Dendritic cell treated with granulocyte-macrophage colony-stimulating factor and Interleukin-4, amounts not matched to agents 40 ng/mL and 50 ng/mL, for 4 days (primary cell): ENCODE measurements at regions of chr4 and their contacts with region 1.

Region 1: DNA sequence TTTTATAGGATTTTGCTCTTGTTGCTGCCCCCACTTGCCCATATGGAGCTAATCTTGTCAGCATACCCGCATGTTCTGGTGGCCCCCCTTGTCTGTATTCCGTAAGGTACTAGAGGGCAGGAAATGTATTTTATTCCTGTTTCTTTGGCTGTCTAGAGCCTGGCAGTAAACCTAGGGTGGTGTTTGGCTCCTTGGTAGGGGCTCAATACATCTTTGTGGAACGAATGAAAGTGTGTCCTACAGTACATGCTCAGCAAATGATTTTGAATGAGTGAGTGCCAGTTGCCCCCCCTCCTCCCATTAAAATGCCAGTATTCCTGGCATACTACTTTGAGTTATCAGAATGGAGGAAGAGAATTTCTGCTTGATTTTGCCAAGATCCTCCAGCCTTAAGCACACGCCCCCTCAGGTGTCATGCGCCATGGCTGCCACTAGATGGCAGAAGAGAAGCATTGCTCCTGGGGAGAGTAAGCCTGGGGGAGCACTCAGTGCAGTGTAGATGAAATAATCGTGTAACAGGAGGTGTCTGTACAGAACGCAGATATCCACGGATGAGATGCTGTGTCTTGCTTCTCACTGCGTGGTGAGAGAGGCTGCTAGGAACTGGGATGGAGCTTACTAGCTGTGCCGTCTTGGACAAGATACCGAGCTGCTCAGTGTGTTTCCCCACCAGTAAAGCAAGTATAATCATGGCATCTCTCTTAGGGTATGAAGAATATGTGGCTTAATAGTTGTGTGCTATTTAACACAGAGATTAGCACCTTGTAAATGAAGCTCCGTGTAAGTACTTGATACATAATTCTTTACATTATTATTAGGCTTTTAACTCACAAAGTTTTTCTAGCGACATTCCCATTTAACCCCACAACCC is 17.2 kb upstream of the RNF212 start:
- H3K4me3 Mint-ChIP-seq: no peak overlapping the region
- H3K27ac Mint-ChIP-seq: no peak overlapping the region
- H3K4me1 Mint-ChIP-seq: peaks cover 5% of the 10 kb centered on the region
- H3K27me3 Mint-ChIP-seq: peaks cover 24% of the 10 kb centered on the region

Region 2: DNA sequence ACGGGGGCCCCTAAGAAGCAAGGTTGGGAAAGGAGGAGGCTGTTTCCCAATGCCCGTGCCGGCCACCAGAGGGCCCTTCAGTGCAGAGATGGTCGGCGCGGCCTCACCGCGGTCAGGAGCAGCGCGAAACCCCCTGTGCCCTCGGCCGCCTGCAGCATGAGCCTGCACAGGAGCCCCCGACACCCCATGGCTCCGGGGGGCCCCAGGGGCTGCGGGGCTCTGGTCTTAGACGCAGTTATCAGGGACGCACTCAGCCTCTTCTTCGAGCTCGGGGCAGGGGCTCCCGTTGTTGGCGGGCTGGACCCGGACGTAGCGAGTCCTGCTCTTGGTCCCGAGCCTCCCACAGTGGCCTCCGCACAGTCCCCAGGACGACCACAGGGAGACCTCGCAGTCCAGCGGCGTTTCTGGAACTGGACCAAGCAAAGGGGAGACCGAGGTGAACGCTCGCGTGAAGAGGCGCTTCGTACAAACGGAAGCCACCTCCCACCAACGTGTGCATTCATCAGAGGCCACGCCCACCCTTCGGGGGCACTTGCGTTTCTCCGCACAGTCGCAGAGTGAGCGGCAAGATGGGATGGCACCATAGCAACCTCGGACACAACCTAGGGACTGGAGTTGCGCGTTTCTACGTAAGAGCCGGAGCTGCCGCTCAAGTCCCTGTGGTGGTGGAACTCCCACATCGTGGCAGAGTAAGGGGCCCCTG is 36.8 kb after region 1 on chr4:
- intact Hi-C with region 1: loop called (anchors 2 kb)
- H3K4me3 Mint-ChIP-seq: peak overlapping the region; percentile 77
- H3K27ac Mint-ChIP-seq: peak overlapping the region; percentile 12
- H3K4me1 Mint-ChIP-seq: peaks cover 48% of the 10 kb centered on the region
- H3K27me3 Mint-ChIP-seq: peaks cover 69% of the 10 kb centered on the region

Region 3: DNA sequence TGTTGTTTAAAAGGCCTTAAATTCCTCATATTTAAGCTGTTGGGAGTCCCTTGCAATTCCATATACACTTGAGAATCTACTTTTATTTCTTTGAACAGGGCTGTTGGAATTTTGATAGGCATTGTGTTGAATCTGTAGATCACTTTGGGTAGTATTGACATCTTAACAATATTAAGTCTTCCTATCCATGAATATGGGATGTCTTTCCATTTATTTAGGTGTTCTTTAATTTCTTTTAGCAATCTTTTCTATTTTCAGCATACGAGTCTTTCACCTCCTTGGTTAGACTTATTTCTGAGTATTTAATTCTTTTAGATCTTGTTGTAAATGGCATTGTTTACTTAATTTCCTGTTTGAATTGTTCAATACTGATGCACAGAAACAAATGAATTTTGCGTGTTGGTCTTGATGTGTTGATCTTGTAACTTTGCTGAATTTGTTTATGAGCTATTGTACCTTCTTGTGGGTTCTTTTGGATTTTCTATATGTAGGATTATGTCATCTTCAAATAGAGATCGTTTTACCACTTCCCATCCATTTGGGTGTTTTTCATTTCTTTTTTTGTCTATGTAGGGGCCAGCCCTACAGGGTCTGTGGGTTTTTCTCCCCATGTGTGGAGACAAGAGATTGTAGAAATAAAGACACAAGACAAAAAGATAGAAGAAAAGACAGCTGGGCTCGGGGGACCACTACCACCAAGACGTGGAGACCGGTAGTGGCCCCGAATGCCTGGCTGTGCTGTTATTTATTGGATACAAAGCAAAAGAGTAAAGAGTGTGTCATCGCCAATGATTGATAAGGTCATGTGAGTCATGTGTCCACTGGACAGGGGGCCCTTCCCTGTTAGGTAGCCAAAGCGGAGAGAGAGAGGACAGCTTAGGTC is 136.6 kb after region 1 on chr4:
- intact Hi-C with region 1: loop called (anchors 1 kb)
- H3K4me3 Mint-ChIP-seq: no peak overlapping the region
- H3K27ac Mint-ChIP-seq: no peak overlapping the region
- H3K4me1 Mint-ChIP-seq: peaks cover 10% of the 10 kb centered on the region
- H3K27me3 Mint-ChIP-seq: peaks cover 1% of the 10 kb centered on the region

Region 4: GRCh38 chr4:1289207-1290164 is 158.9 kb after region 1 on chr4 and contains the start of gene MAEA:
- intact Hi-C with region 1: loop called (anchors 5 kb)
- H3K4me3 Mint-ChIP-seq: peak within 1 kb of the TSS; percentile 91
- H3K27ac Mint-ChIP-seq: peak within 1 kb of the TSS; percentile 88
- H3K4me1 Mint-ChIP-seq: peaks cover 38% of the 10 kb centered on the region
- H3K27me3 Mint-ChIP-seq: peaks cover 1% of the 10 kb centered on the region

Region 5: GRCh38 chr4:1351854-1352633 is 221.5 kb after region 1 on chr4:
- intact Hi-C with region 1: loop called (anchors 2 kb)
- H3K4me3 Mint-ChIP-seq: no peak overlapping the region
- H3K27ac Mint-ChIP-seq: no peak overlapping the region
- H3K4me1 Mint-ChIP-seq: peaks cover 32% of the 10 kb centered on the region
- H3K27me3 Mint-ChIP-seq: no peaks in the 10 kb centered on the region